Head of caudate nucleus (tissue), 42 donors: ENCODE measurements at regions of chr12 and their contacts with region 1.

Region 1: GRCh38 chr12:68686595-68687521 is at the start of gene NUP107:
- DNase-seq: peak; percentile 88 to 99 (median 96)

Region 2: DNA sequence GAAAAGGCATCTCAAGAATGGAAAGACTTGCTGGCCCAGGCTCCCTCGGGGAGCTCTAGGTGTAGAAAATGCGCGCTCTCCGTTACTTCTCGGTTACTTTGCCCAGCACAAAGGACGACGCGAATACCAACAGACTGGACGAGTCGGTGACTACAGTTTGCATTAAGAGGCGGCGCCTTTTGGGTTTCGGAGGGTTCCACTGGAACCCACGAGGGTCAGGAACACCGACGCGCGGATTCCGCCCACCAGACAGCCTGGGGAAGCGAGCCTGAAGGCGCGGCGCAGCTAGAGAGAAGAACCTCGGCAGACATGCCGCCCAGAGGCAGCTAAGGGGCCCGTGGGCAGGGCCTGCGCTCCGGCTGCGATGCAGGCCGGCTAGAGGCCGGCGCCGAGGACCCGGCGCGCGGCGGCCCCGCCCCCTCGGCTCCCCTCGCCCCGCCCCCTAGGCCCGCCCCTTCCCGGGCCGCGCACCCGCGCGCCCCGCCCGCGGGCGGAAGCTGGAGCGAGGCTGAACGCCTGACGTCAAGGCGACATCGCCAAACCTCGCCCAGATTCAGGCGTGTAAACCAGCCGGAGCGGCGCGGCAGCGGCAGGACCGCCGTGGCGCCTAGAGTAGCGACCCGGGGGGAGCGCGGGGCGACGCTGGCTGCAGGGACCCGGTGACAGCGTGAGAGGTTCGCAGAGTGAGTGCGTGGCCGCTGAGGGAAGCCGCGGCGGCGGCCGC is 76.3 kb before region 1 on chr12 and contains the start of gene RAP1B:
- intact Hi-C with region 1: loop called (anchors 5 kb)
- DNase-seq: peak; percentile 80 to 97 (median 92)

Region 3: DNA sequence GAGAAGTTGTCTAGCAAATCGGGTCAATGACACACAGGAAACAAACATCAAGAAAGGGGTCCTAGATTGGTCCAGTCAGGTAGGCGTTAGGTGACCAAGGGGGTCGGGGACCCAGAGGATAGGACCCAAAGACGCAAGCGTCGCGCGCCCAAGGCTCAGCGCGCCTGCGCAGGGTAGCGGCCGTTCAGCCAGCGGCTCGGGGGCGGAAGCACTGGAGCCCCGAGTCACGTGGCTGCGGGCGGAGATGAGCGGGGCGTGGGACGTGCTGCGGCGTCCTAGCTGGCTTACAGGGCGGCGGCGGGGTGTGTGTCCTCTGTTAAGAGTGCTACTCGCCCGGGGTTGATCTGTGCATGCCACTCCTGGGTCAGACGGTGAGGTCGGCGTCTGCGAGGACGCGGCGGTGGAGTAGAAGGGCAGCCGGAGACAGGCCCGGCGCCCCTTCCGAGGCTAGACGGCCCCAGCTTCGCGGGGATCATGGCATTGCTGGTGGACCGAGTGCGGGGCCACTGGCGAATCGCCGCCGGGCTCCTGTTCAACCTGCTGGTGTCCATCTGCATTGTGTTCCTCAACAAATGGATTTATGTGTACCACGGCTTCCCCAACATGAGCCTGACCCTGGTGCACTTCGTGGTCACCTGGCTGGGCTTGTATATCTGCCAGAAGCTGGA is 59.2 kb after region 1 on chr12 and contains the start of gene SLC35E3:
- intact Hi-C with region 1: loop called (anchors 5 kb)
- DNase-seq: peak; percentile 90 to 98 (median 96)